Activated B cell treated with CpG ODN at 0.5 μM for 24 hours (primary cell): ENCODE measurements at regions of chr6 and their contacts with region 1.

Region 1: DNA sequence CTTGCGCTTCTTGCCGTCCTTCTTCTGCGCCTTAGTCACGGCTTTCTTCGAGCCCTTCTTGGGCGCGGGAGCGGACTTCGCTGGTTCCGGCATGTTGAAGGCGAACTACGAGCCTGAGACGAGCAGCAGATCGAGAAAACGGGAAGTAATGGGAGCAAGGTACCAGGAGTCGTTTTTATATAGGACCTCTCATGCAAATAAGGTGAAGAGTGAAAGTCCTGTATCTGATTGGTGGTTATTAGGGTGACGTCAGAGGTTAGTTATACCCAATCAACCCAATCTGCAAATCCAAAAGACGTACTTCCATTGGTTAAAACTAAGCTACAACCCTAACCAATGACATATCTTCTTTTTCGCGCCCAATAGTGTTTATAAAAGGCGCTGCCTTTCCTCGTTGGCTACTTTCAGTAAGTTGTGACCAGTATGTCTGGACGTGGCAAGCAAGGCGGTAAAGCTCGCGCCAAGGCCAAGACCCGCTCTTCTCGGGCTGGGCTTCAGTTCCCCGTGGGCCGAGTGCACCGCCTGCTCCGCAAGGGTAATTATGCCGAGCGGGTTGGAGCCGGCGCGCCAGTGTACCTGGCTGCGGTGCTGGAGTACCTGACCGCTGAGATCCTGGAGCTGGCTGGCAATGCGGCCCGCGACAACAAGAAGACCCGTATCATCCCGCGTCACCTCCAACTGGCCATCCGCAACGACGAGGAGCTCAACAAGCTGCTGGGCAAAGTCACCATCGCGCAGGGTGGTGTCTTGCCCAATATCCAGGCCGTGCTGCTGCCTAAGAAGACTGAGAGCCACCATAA is 100.6 kb upstream of the PRSS16 start:
- DNase-seq: peak; percentile 70
- ATAC-seq: peak; percentile 80
- H3K4me3 Mint-ChIP-seq: no peak overlapping the region
- H3K27ac Mint-ChIP-seq: no peak overlapping the region
- H3K4me1 Mint-ChIP-seq: peaks cover 26% of the 10 kb centered on the region
- H3K27me3 Mint-ChIP-seq: no peaks in the 10 kb centered on the region
- CTCF ChIP-seq: no peak

Region 2: DNA sequence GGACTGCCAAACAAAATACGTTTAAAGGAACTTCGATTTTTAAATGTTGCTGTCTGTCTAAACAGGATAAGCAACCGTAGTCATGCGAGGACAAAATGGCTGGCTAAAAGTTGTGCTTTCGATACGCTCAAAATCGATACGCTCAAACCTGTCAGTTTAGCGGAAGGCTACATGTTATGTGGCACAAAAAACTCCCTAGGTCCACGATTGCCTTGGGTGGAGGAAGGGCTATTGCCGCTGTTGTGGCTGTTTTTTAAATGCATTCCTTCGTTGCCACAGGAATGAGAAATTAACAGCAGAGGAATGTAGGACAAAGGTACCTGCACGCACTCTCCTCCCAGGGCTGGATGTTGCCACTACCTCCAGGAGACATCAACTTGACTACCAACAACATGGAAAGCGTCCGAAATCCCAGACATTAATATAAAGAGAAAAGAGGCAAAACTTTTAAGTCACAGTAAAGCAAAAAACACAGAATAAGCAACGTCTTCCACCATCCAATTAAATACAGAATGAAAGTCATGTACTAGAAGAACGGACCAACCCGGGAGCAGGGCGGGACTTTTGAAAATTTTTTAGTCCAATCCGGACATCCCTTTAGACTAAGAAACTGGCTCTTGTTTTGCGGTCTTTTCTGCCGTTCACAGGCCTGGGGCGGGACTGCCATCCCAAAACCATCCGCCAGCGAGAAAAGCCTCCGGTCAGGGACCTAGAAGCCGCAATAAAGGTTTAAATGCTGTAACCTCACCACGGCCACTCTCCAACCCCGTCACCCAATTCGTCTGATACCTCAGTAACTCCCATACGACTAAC is 1091.8 kb before region 1 on chr6:
- CTCF ChIA-PET with region 1: no interaction called
- POLR2A ChIA-PET with region 1: interaction called, 23 read pairs
- intact Hi-C with region 1: no loop called
- DNase-seq: peak; percentile 63
- ATAC-seq: peak; percentile 65
- H3K4me3 Mint-ChIP-seq: peak overlapping the region; percentile 97
- H3K27ac Mint-ChIP-seq: peak overlapping the region; percentile 100
- H3K4me1 Mint-ChIP-seq: peaks cover 20% of the 10 kb centered on the region
- H3K27me3 Mint-ChIP-seq: no peaks in the 10 kb centered on the region
- CTCF ChIP-seq: no peak

Region 3: DNA sequence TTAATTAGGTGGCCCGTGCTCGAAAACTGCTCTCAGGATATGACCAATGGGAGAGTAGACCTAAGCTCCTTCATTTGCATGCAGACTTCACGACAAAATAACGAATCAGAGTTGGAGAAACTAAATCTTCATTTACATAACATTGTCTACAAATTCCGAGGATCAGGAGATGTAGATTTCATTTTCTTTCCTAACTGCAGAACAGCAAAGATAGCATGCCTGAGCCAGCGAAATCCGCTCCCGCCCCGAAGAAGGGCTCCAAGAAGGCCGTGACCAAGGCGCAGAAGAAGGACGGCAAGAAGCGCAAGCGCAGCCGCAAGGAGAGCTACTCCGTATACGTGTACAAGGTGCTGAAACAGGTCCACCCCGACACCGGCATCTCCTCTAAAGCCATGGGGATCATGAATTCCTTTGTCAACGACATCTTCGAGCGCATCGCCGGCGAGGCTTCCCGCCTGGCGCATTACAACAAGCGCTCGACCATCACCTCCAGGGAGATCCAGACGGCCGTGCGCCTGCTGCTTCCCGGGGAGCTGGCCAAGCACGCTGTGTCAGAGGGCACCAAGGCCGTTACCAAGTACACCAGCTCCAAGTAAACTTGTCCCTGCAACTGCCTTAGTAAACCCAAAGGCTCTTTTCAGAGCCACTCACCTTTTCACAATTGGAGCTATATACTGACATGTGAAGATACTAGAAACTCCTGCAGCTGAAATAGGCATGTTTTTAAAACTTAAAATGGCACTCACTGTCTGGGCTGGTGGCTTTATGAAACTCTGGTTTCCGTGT is 963.1 kb before region 1 on chr6:
- CTCF ChIA-PET with region 1: interaction called, 3 read pairs
- POLR2A ChIA-PET with region 1: interaction called, 17 read pairs
- intact Hi-C with region 1: no loop called
- DNase-seq: peak; percentile 60
- ATAC-seq: peak; percentile 86
- H3K4me3 Mint-ChIP-seq: peak overlapping the region; percentile 98
- H3K27ac Mint-ChIP-seq: peak overlapping the region; percentile 91
- H3K4me1 Mint-ChIP-seq: peaks cover 30% of the 10 kb centered on the region
- H3K27me3 Mint-ChIP-seq: no peaks in the 10 kb centered on the region
- CTCF ChIP-seq: no peak

Region 4: GRCh38 chr6:26553635-26554446 is 593.1 kb before region 1 on chr6:
- CTCF ChIA-PET with region 1: no interaction called
- POLR2A ChIA-PET with region 1: interaction called, 3 read pairs
- intact Hi-C with region 1: loop called (anchors 5 kb)
- DNase-seq: peak; percentile 67
- ATAC-seq: peak; percentile 46
- H3K4me3 Mint-ChIP-seq: no peak overlapping the region
- H3K27ac Mint-ChIP-seq: no peak overlapping the region
- H3K4me1 Mint-ChIP-seq: peaks cover 28% of the 10 kb centered on the region
- H3K27me3 Mint-ChIP-seq: no peaks in the 10 kb centered on the region
- CTCF ChIP-seq: no peak

Region 5: GRCh38 chr6:27091661-27092646 is 55.0 kb before region 1 on chr6:
- CTCF ChIA-PET with region 1: no interaction called
- POLR2A ChIA-PET with region 1: no interaction called
- intact Hi-C with region 1: no loop called
- DNase-seq: no peak
- ATAC-seq: no peak
- H3K4me3 Mint-ChIP-seq: peak overlapping the region; percentile 20
- H3K27ac Mint-ChIP-seq: no peak overlapping the region
- H3K4me1 Mint-ChIP-seq: peaks cover 12% of the 10 kb centered on the region
- H3K27me3 Mint-ChIP-seq: peaks cover 64% of the 10 kb centered on the region
- CTCF ChIP-seq: no peak

Region 6: DNA sequence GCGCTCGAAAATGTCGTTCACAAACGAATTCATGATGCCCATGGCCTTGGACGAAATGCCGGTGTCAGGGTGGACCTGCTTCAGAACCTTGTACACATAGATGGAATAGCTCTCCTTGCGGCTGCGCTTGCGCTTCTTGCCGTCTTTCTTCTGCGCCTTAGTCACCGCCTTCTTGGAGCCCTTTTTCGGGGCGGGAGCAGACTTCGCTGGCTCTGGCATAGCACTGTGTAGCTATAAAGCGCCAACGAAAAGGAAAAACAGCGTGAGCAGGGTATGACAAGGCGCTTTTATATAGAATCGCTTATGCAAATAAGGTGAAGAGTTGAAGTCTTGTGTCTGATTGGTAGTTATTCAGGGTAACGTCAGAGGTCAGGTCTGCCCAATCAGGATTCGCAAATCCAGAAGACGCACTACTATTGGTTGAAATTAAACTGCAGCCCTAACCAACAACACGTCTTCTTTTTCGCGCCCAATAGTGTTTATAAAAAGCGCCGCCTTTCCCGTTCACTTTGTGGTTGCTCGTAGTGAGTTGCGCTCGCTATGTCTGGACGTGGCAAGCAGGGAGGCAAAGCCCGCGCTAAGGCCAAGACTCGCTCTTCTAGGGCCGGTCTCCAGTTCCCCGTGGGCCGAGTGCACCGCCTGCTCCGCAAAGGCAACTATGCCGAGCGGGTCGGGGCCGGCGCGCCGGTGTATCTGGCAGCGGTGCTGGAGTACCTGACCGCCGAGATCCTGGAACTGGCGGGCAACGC is 14.2 kb before region 1 on chr6:
- CTCF ChIA-PET with region 1: interaction called, 11 read pairs
- POLR2A ChIA-PET with region 1: interaction called, 510 read pairs
- intact Hi-C with region 1: loop called (anchors 1 kb)
- DNase-seq: peak; percentile 77
- ATAC-seq: peak; percentile 84
- H3K4me3 Mint-ChIP-seq: no peak overlapping the region
- H3K27ac Mint-ChIP-seq: no peak overlapping the region
- H3K4me1 Mint-ChIP-seq: peaks cover 14% of the 10 kb centered on the region
- H3K27me3 Mint-ChIP-seq: no peaks in the 10 kb centered on the region
- CTCF ChIP-seq: no peak

Region 7: DNA sequence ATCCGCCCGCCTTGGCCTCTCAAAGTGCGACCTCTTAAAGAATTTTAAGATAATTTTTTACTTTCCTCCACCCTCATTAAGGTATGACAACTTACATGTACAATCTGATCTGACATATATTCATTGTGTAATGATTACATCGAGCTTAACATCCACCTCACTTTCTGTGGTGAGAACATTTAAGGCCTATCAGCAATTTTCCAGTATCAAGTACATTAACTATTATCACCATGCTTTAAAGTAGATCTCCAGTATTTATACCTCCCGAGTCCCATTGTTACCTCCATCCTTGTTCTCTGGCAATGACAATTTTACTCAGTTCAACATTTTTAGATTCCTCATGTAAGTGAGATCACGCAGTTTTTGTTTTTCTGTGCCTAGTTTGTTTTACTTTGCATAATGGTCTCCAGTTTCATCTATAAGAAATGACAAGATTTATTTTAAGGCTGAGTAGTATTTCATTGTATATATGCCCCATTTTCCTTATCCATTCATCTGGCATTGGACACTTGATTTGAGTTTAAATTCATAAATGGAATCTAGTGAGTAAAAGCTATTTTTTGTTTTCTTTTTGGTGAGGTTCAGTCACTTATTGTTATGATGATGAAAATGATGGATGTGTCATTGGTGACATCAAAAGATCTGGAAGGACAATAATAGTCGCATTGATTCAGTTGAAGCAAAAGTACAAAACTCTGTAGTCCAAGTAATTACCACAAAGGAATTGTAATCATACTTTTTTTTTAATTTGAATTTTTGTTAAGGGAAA is 678.3 kb after region 1 on chr6:
- CTCF ChIA-PET with region 1: no interaction called
- POLR2A ChIA-PET with region 1: interaction called, 40 read pairs
- intact Hi-C with region 1: no loop called
- DNase-seq: no peak
- ATAC-seq: no peak
- H3K4me3 Mint-ChIP-seq: peak overlapping the region; percentile 96
- H3K27ac Mint-ChIP-seq: peak overlapping the region; percentile 99
- H3K4me1 Mint-ChIP-seq: peaks cover 31% of the 10 kb centered on the region
- H3K27me3 Mint-ChIP-seq: no peaks in the 10 kb centered on the region
- CTCF ChIP-seq: no peak